Activated T-helper 2 cell treated with anti-CD3 and anti-CD28 coated beads, Interferon-gamma antibody, Interleukin-2, Interleukin-4, amounts not matched to agents 10 μg/mL and 5 μg/mL and 100 μg/mL, durations not matched to agents 14 hours and 24 hours and 36 hours (primary cell): ENCODE measurements at regions of chr6 and their contacts with region 1.

Region 1: DNA sequence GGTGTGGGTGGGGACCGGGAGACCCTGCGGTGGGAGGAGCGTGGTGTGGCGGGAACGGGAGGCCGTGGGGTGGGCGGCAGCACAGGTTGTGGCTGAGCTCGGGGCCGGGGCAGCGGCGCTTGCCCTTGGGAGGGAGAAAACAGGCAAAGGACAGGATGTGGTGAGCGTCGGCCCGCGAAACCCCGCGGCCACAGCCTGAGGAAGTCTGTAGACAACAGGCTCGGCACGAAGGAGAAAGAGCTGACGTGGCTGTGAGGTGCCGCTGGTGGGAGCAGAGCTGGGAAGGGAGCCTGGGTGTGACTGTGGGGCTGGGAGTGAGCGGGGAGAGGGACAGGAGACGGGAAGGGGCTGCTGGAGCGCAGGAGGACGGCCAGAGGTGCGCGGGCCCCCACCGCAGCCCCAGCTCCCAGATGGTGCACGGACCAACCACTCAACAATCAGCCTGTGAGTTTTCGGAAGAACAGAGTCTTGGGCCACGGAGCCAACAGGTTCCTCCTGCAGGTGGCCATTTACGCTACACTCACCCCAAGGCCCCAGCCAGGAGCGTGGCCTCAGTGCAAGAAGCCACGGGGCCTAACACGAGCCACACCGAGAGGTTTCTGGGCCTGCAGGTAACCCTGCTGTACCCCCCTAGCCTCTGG is 202.8 kb downstream of the DLL1 start:
- DNase-seq: peak; percentile 66
- H3K4me3 Mint-ChIP-seq: peak overlapping the region; percentile 83
- H3K27ac Mint-ChIP-seq: peak overlapping the region; percentile 93
- H3K4me1 Mint-ChIP-seq: peaks cover 27% of the 10 kb centered on the region
- H3K27me3 Mint-ChIP-seq: no peaks in the 10 kb centered on the region

Region 2: GRCh38 chr6:169800668-169801395 is 287.2 kb before region 1 on chr6:
- intact Hi-C with region 1: loop called (anchors 10 kb)
- DNase-seq: no peak
- H3K4me3 Mint-ChIP-seq: no peak overlapping the region
- H3K27ac Mint-ChIP-seq: no peak overlapping the region
- H3K4me1 Mint-ChIP-seq: peaks cover 31% of the 10 kb centered on the region
- H3K27me3 Mint-ChIP-seq: peaks cover 56% of the 10 kb centered on the region

Region 3: GRCh38 chr6:169990095-169991030 is 97.7 kb before region 1 on chr6:
- intact Hi-C with region 1: loop called (anchors 10 kb)
- DNase-seq: peak; percentile 18
- H3K4me3 Mint-ChIP-seq: peak overlapping the region; percentile 35
- H3K27ac Mint-ChIP-seq: peak overlapping the region; percentile 34
- H3K4me1 Mint-ChIP-seq: peaks cover 19% of the 10 kb centered on the region
- H3K27me3 Mint-ChIP-seq: no peaks in the 10 kb centered on the region

Region 4: GRCh38 chr6:170052991-170053821 is 34.9 kb before region 1 on chr6:
- intact Hi-C with region 1: no loop called
- DNase-seq: no peak
- H3K4me3 Mint-ChIP-seq: no peak overlapping the region
- H3K27ac Mint-ChIP-seq: no peak overlapping the region
- H3K4me1 Mint-ChIP-seq: no peaks in the 10 kb centered on the region
- H3K27me3 Mint-ChIP-seq: no peaks in the 10 kb centered on the region

Region 5: DNA sequence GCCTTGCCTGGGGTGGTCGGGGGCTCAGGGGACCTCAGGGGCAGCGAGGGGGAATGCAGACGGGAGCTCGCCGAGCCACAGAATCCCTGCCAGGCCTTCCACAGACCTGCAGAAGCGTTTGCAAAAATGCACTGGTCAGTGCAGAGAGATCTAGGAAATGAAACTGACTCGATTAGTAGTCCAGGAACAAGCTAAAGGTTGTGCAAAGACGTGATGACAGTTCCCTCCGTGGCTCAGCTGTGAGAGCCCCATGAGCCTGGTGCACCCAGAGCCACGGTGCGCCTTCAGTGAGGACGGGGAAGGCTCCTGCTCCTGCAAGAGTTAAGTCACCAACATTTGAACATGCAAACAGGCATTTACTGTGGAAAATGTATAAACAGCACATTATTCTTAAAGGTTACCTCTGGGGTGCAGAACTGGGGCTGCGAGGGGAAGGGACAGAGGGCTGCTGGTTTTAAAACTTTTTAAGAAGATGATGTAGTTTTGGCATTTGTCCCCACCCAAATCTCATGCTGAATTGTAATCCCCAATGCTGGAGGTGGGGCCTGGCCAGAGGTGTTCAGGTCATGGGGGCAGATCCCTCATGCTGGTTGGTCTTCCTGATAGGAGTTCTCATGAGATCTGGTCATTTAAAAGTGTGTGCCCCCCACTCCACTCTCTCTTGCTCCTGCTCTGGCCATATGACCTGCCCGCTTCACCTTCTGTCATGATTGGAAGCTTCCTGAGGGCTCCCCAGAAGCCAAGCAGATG is 55.5 kb after region 1 on chr6:
- intact Hi-C with region 1: loop called (anchors 2 kb)
- DNase-seq: no peak
- H3K4me3 Mint-ChIP-seq: no peak overlapping the region
- H3K27ac Mint-ChIP-seq: no peak overlapping the region
- H3K4me1 Mint-ChIP-seq: peaks cover 19% of the 10 kb centered on the region
- H3K27me3 Mint-ChIP-seq: peaks cover 4% of the 10 kb centered on the region